ENCODE measurements at regions of chr12 and their contacts with region 1.

Region 1: GRCh38 chr12:118498181-118498580 is 121.8 kb downstream of the SUDS3 start:
- DNase-seq: no peak
- ATAC-seq: peak; percentile 85

Region 2: GRCh38 chr12:118537481-118537917 is 39.3 kb after region 1 on chr12:
- intact Hi-C with region 1: loop called (anchors 5 kb)
- DNase-seq: peak; percentile 66
- ATAC-seq: peak; percentile 90

Region 3: GRCh38 chr12:118574288-118574687 is 76.1 kb after region 1 on chr12:
- intact Hi-C with region 1: loop called (anchors 5 kb)
- DNase-seq: no peak
- ATAC-seq: no peak

Measured in Right ventricle myocardium inferior (tissue), 1 donor.